ENCODE measurements at regions of chr15 and their contacts with region 1.

Region 1: GRCh38 chr15:36622197-36622795 is 42.9 kb downstream of the CDIN1 start:
- DNase-seq: no peak
- H3K4me3 ChIP-seq: no peak overlapping the region
- H3K27ac ChIP-seq: no peak overlapping the region
- H3K4me1 ChIP-seq: no peaks in the 10 kb centered on the region
- H3K27me3 ChIP-seq: no peaks in the 10 kb centered on the region
- CTCF ChIP-seq: no peak

Region 2: GRCh38 chr15:36075333-36075732 is 547.0 kb before region 1 on chr15:
- intact Hi-C with region 1: loop called (anchors 5 kb)
- DNase-seq: no peak
- H3K4me3 ChIP-seq: no peak overlapping the region
- H3K27ac ChIP-seq: no peak overlapping the region
- H3K4me1 ChIP-seq: no peaks in the 10 kb centered on the region
- H3K27me3 ChIP-seq: no peaks in the 10 kb centered on the region
- CTCF ChIP-seq: no peak

Region 3: DNA sequence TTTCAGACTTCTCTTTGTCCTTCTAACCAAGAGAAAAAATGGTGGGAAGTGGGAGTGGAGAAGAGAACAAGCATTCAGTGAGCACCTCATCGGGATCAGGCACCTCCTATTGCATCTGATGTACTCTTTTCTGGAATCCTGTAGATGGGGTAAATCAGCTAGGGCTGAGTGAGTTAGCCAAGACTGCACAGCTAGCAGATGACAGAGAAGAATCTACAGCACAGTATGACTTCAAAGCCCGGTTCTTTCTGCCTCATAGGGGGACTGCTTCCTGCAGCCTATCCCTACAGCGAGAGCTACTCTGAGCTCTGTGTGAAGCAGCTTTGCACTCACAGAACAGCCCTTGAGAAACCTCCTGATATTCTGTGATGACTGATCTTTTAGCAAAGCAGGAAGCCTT is 753.2 kb after region 1 on chr15:
- intact Hi-C with region 1: no loop called
- DNase-seq: no peak
- H3K4me3 ChIP-seq: no peak overlapping the region
- H3K27ac ChIP-seq: no peak overlapping the region
- H3K4me1 ChIP-seq: no peaks in the 10 kb centered on the region
- H3K27me3 ChIP-seq: no peaks in the 10 kb centered on the region
- CTCF ChIP-seq: no peak